Heart left ventricle (tissue), 16 donors: ENCODE measurements at regions of chr15 and their contacts with region 1.

Region 1: GRCh38 chr15:75684642-75685041 is 28.0 kb downstream of the CSPG4 start:
- DNase-seq: no peak
- ATAC-seq: no peak
- H3K4me3 ChIP-seq: no peak overlapping the region
- H3K27ac ChIP-seq: no peak overlapping the region
- H3K4me1 ChIP-seq: peaks cover 0 to 11% (median 5%) of the 10 kb centered on the region in 12 donors
- H3K27me3 ChIP-seq: no peaks in the 10 kb centered on the region
- CTCF ChIP-seq: no peak
- POLR2A ChIP-seq: no peak

Region 2: GRCh38 chr15:75367913-75368688 is 316.5 kb before region 1 on chr15 and contains the start of gene MAN2C1:
- intact Hi-C with region 1: loop called in 6 of 10 experiments (anchors 5 to 10 kb)
- DNase-seq: peak; percentile 94 to 97 (median 97)
- ATAC-seq: peak; percentile 95 to 98 (median 96)
- H3K4me3 ChIP-seq: peak within 1 kb of the TSS; percentile 63 to 100 (median 86)
- H3K27ac ChIP-seq: peak within 1 kb of the TSS; percentile 92 to 100 (median 98)
- H3K4me1 ChIP-seq: peaks cover 0 to 23% (median 16%) of the 10 kb centered on the region in 12 donors
- H3K27me3 ChIP-seq: no peaks in the 10 kb centered on the region
- CTCF ChIP-seq: peak; percentile 52 to 93 (median 70)
- POLR2A ChIP-seq: peak in 1 of 2 donors; percentile 77
- total RNA-seq, gene MAN2C1: 68.0 to 130 (median 111) TPM

Region 3: DNA sequence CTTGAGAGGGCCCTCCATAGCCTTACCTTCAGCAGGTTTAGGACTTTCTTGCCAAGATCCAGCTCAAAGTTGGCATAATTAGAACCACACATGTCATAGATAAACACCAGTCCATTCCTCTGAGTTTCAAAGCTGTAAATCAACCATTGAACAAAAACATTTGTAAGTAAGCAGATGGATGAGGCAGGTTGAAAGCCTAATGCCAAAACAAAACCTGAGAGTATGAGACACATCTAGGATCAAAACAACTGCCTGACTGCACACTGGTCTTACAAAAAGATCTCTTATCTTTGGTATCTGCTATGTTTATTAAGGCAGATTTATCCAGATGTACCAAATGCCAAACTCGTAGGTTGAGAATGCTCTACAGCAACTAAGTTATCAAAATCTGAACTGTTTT is 167.4 kb before region 1 on chr15:
- intact Hi-C with region 1: loop called in 1 of 10 experiments (anchors 10 kb)
- DNase-seq: no peak
- ATAC-seq: no peak
- H3K4me3 ChIP-seq: no peak overlapping the region
- H3K27ac ChIP-seq: no peak overlapping the region
- H3K4me1 ChIP-seq: no peaks in the 10 kb centered on the region
- H3K27me3 ChIP-seq: no peaks in the 10 kb centered on the region
- CTCF ChIP-seq: no peak
- POLR2A ChIP-seq: no peak

Region 4: GRCh38 chr15:75647370-75648155 is 37.1 kb before region 1 on chr15 and contains the start of gene SNX33:
- intact Hi-C with region 1: loop called in 1 of 10 experiments (anchors 5 kb)
- DNase-seq: peak; percentile 88 to 91 (median 89)
- ATAC-seq: peak; percentile 39 to 86 (median 80)
- H3K4me3 ChIP-seq: peak within 1 kb of the TSS; percentile 63 to 97 (median 86)
- H3K27ac ChIP-seq: peak within 1 kb of the TSS; percentile 83 to 99 (median 96)
- H3K4me1 ChIP-seq: peaks cover 8 to 58% (median 51%) of the 10 kb centered on the region in 12 donors
- H3K27me3 ChIP-seq: no peaks in the 10 kb centered on the region
- CTCF ChIP-seq: peak; percentile 30 to 66 (median 50)
- POLR2A ChIP-seq: peak in 1 of 2 donors; percentile 68
- total RNA-seq, gene SNX33: 8.3 to 20.9 (median 11.6) TPM

Region 5: GRCh38 chr15:75732809-75733451 is 48.3 kb after region 1 on chr15:
- intact Hi-C with region 1: loop called in 5 of 10 experiments (anchors 2 to 10 kb)
- DNase-seq: peak in 4 of 5 donors; percentile 65 to 75 (median 70)
- ATAC-seq: peak; percentile 18 to 77 (median 67)
- H3K4me3 ChIP-seq: no peak overlapping the region
- H3K27ac ChIP-seq: peak overlapping the region in 3 of 12 donors; percentile 10 to 63 (median 13)
- H3K4me1 ChIP-seq: peaks cover 0 to 42% (median 18%) of the 10 kb centered on the region in 12 donors
- H3K27me3 ChIP-seq: no peaks in the 10 kb centered on the region
- CTCF ChIP-seq: peak; percentile 71 to 94 (median 87)
- POLR2A ChIP-seq: no peak

Region 6: GRCh38 chr15:75801859-75802593 is 117.4 kb after region 1 on chr15:
- intact Hi-C with region 1: loop called in 6 of 10 experiments (anchors 2 to 5 kb)
- DNase-seq: peak; percentile 78 to 92 (median 84)
- ATAC-seq: peak; percentile 93 to 99 (median 98)
- H3K4me3 ChIP-seq: peak overlapping the region in 8 of 12 donors; percentile 11 to 40 (median 29)
- H3K27ac ChIP-seq: no peak overlapping the region
- H3K4me1 ChIP-seq: peaks cover 0 to 16% (median 4%) of the 10 kb centered on the region in 12 donors
- H3K27me3 ChIP-seq: peaks cover 0 to 27% (median 0%) of the 10 kb centered on the region in 9 donors
- CTCF ChIP-seq: peak; percentile 79 to 98 (median 92)
- POLR2A ChIP-seq: no peak